Activated T-helper 1 cell treated with anti-CD3 and anti-CD28 coated beads, Interleukin-12 subunit alpha, Interleukin-12 subunit beta, Interleukin-2, Interleukin-4 antibody, amounts not matched to agents 30 ng/mL and 10 ng/mL and 1 ng/mL, durations not matched to agents 14 hours and 24 hours and 36 hours (primary cell): ENCODE measurements at regions of chrX and their contacts with region 1.

Region 1: DNA sequence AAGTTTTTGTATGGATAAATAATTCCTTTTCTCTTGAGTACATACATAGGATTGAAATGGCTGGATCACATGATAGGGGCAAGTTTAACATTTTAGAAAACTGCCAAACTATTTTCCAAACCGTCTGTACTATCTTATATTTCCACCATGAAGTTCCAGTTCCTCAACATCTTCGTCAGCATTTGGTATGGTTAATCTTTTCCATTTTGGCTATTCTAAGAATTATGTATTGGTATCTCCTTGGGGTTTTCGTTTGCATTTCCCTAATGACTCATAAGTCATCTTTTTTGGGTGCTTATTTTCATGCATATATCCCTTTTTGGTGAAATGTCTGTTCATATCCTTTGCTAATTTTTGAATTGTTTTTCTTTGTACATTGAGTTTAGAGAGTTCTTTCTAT is 227.7 kb downstream of the DLG3 start:
- DNase-seq: no peak
- H3K4me3 Mint-ChIP-seq: peak overlapping the region; percentile 45
- H3K27ac Mint-ChIP-seq: peak overlapping the region; percentile 90
- H3K4me1 Mint-ChIP-seq: peaks cover 32% of the 10 kb centered on the region
- H3K27me3 Mint-ChIP-seq: no peaks in the 10 kb centered on the region

Region 2: GRCh38 chrX:70336767-70337166 is 335.6 kb before region 1 on chrX:
- intact Hi-C with region 1: loop called (anchors 1 kb)
- DNase-seq: peak; percentile 1
- H3K4me3 Mint-ChIP-seq: no peak overlapping the region
- H3K27ac Mint-ChIP-seq: peak overlapping the region; percentile 2
- H3K4me1 Mint-ChIP-seq: peaks cover 26% of the 10 kb centered on the region
- H3K27me3 Mint-ChIP-seq: no peaks in the 10 kb centered on the region

Region 3: GRCh38 chrX:70592091-70592490 is 80.2 kb before region 1 on chrX:
- intact Hi-C with region 1: loop called (anchors 1 kb)
- DNase-seq: peak; percentile 5
- H3K4me3 Mint-ChIP-seq: no peak overlapping the region
- H3K27ac Mint-ChIP-seq: peak overlapping the region; percentile 73
- H3K4me1 Mint-ChIP-seq: peaks cover 25% of the 10 kb centered on the region
- H3K27me3 Mint-ChIP-seq: no peaks in the 10 kb centered on the region

Region 4: DNA sequence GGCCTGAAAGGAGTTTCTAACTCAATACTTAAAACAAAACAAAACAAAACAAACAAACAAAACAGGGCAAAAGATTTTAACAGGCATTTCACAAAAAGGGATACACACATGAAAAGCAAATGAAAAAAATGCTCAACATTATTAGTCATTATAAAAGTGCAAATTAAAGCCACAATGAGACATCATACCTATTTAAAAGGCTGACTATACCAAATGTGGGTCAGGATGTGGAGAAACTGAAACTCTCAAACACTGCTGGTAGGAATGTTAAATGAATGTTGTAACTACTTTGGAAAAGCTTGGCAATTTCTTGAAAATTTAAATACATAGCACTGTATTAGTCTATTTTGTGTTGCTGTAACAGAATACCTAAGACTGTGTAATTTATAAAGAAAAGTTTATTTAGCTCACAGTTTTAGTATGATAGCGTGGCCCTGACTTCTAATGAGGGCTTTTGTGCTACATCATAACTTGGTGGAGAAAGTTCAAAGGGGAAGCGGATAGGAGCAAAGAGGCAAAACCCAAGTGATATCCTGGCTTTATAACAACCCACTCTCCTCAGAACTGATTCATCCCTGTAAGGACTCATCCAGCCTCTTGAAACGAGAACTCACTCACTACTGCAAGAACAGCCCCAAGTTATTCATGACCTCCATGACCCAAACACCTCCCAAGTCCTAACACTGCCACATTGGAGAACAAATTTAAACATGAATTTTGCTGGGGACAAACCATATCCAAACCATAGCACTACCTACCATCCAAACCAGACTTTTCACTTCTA is 22.2 kb after region 1 on chrX:
- intact Hi-C with region 1: loop called (anchors 1 kb)
- DNase-seq: no peak
- H3K4me3 Mint-ChIP-seq: no peak overlapping the region
- H3K27ac Mint-ChIP-seq: no peak overlapping the region
- H3K4me1 Mint-ChIP-seq: peaks cover 11% of the 10 kb centered on the region
- H3K27me3 Mint-ChIP-seq: no peaks in the 10 kb centered on the region

Region 5: DNA sequence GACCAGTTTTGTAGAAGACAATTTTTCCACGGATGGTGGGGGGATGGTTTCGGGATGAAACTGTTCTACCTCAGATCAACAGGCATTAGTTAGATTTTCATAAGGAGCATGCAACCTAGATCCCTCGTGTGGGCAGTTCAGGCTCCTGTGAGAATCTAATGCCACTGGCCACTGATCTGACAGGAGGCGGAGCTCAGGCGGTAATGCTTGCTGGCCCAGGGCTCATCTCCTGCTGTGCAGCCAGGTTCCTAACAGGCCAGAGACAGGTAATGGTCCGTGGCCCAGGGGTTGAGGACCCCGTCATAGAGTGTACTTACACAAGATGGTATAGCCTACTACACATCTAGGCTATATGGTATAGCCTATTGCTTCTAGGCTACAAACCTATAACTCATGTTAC is 229.1 kb after region 1 on chrX:
- intact Hi-C with region 1: no loop called
- DNase-seq: no peak
- H3K4me3 Mint-ChIP-seq: no peak overlapping the region
- H3K27ac Mint-ChIP-seq: no peak overlapping the region
- H3K4me1 Mint-ChIP-seq: no peaks in the 10 kb centered on the region
- H3K27me3 Mint-ChIP-seq: no peaks in the 10 kb centered on the region